Activated CD8-positive, alpha-beta T cell treated with anti-CD3 and anti-CD28 coated beads, Interleukin-2, amount 10 ng/mL, durations not matched to agents 7 days and 5 days (primary cell): ENCODE measurements at regions of chr13 and their contacts with region 1.

Region 1: DNA sequence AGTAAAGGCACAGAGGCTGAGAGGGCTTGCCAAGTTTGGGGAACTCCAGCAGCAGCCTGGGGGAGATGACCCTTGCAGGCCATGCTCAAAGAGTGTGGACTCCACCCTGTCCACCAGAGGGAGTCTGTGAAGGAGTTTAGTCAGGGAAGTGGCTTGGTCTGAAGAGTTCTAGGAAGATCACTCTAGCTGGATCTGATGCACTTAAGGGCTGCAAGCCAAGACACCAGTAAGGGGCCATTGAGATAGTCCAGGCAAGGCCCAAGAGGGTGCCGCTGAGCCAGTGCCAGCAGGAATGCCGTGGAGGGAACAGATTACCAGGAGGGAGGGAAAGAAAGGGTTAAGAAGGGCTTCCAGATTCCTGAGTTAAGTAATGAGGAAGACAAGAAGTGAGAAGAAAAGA is 68.7 kb downstream of the ZAR1L start:
- DNase-seq: peak; percentile 58
- ATAC-seq: peak; percentile 79
- H3K4me3 Mint-ChIP-seq: no peak overlapping the region
- H3K27ac Mint-ChIP-seq: no peak overlapping the region
- H3K4me1 Mint-ChIP-seq: peaks cover 7% of the 10 kb centered on the region
- H3K27me3 Mint-ChIP-seq: no peaks in the 10 kb centered on the region

Region 2: GRCh38 chr13:32234932-32235331 is 11.5 kb before region 1 on chr13:
- CTCF ChIA-PET with region 1: interaction called, 20 read pairs
- POLR2A ChIA-PET with region 1: no interaction called
- DNase-seq: no peak
- ATAC-seq: no peak
- H3K4me3 Mint-ChIP-seq: no peak overlapping the region
- H3K27ac Mint-ChIP-seq: no peak overlapping the region
- H3K4me1 Mint-ChIP-seq: peaks cover 3% of the 10 kb centered on the region
- H3K27me3 Mint-ChIP-seq: no peaks in the 10 kb centered on the region

Region 3: GRCh38 chr13:32261567-32261966 is 15.1 kb after region 1 on chr13:
- CTCF ChIA-PET with region 1: interaction called, 13 read pairs
- POLR2A ChIA-PET with region 1: no interaction called
- DNase-seq: no peak
- ATAC-seq: no peak
- H3K4me3 Mint-ChIP-seq: no peak overlapping the region
- H3K27ac Mint-ChIP-seq: no peak overlapping the region
- H3K4me1 Mint-ChIP-seq: no peaks in the 10 kb centered on the region
- H3K27me3 Mint-ChIP-seq: peaks cover 9% of the 10 kb centered on the region